Endothelial cell of umbilical vein (primary cell): ENCODE measurements at regions of chr5 and their contacts with region 1.

Region 1: DNA sequence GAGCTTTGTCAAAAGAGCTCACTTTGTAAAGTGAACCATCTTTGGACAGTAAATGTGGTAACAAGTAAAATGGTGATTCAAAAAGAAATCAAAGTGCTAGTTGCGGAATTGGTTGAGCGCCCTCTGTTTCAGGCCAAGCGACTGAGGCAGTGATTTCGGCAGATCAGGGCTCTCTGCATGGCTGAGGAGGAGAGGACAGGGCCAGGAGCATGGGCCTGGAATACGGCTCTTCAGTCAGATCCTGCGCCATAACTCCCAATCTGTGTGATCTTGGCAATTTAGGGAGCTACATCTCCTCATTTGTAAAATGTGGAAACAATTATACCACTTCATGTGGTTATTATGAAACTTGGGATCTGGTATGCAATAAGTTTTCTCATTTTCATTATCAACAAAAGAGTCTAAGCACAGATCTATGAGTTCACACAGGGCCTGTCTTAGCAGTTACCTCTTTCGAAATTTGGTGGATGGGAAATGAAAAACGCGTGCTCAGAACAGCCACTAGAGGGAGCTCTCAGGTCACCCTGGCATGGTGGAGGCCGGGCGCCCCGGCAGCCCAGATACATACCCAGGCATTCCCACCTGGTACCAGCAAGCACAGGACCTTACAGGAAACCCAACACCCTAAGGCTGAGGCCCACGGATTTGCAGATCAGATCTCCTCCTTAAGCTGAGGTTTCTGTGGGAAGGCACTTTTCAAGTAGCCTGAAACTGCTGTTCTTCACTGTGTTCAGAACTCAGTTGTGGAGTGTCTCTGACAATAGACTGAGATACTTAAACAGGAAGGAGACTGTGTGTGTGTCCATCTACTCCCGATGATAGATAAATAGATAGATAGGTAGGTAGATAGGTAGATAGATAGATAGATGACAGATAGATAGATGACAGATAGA is 303.7 kb downstream of the RAB3C start:
- DNase-seq: peak; percentile 44
- H3K4me3 ChIP-seq: no peak overlapping the region
- H3K27ac ChIP-seq: no peak overlapping the region
- H3K4me1 ChIP-seq: no peaks in the 10 kb centered on the region
- H3K27me3 ChIP-seq: peaks cover 7 to 12% of the 10 kb centered on the region in 2 experiments
- CTCF ChIP-seq: peak; percentile 84 to 90
- POLR2A ChIP-seq: no peak

Region 2: GRCh38 chr5:58902765-58903164 is 16.2 kb after region 1 on chr5:
- CTCF ChIA-PET with region 1: interaction called, 24 read pairs
- POLR2A ChIA-PET with region 1: no interaction called
- dilution Hi-C with region 1: no loop called
- intact Hi-C with region 1: no loop called
- DNase-seq: no peak
- H3K4me3 ChIP-seq: no peak overlapping the region
- H3K27ac ChIP-seq: no peak overlapping the region
- H3K4me1 ChIP-seq: no peaks in the 10 kb centered on the region
- H3K27me3 ChIP-seq: peaks cover 12 to 14% of the 10 kb centered on the region in 2 experiments
- CTCF ChIP-seq: no peak
- POLR2A ChIP-seq: no peak

Region 3: DNA sequence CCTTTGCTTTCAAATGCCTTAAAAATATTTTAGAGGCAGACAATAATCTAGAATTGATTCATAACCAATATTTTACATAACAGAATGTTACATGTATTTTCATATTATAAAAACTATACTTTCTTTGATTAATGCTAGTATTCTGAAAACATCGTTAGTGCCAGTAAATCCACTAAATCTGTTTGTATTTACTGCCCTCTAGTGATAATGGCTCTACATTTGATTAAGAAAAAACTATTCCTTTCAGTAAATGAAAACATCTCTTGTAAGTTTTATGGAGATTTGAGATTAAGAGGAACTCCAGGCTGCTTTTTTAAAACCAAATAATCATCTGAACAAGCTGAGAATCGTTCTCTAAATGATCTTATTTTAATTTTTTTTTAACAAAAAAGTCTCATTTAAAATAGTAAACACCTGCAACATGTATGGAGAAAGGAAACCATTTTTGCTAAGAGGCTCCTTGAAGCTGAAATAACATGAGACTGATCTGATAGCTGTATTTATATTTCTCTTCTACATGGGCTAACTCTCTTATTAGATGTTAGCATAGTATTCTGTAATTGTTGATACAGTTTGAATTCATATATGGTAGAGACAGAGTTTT is 121.0 kb after region 1 on chr5:
- CTCF ChIA-PET with region 1: interaction called, 59 read pairs
- POLR2A ChIA-PET with region 1: no interaction called
- dilution Hi-C with region 1: no loop called
- intact Hi-C with region 1: loop called (anchors 1 kb)
- DNase-seq: peak; percentile 27
- H3K4me3 ChIP-seq: no peak overlapping the region
- H3K27ac ChIP-seq: no peak overlapping the region
- H3K4me1 ChIP-seq: no peaks in the 10 kb centered on the region
- H3K27me3 ChIP-seq: peaks cover 0 to 1% of the 10 kb centered on the region in 2 experiments
- CTCF ChIP-seq: peak in 1 of 2 donors; percentile 12
- POLR2A ChIP-seq: no peak

Region 4: GRCh38 chr5:59174248-59174844 is 287.8 kb after region 1 on chr5:
- CTCF ChIA-PET with region 1: interaction called, 69 read pairs
- POLR2A ChIA-PET with region 1: no interaction called
- dilution Hi-C with region 1: no loop called
- intact Hi-C with region 1: loop called (anchors 1 kb)
- DNase-seq: peak; percentile 64
- H3K4me3 ChIP-seq: no peak overlapping the region
- H3K27ac ChIP-seq: no peak overlapping the region
- H3K4me1 ChIP-seq: no peaks in the 10 kb centered on the region
- H3K27me3 ChIP-seq: no peaks in the 10 kb centered on the region
- CTCF ChIP-seq: peak; percentile 63 to 68
- POLR2A ChIP-seq: no peak